Left cardiac atrium (tissue), 4 donors: ENCODE measurements at regions of chr6 and their contacts with region 1.

Region 1: GRCh38 chr6:137313928-137314855 is 95.0 kb upstream of the IFNGR1 start:
- DNase-seq: peak; percentile 80
- ATAC-seq: peak; percentile 93 to 95

Region 2: DNA sequence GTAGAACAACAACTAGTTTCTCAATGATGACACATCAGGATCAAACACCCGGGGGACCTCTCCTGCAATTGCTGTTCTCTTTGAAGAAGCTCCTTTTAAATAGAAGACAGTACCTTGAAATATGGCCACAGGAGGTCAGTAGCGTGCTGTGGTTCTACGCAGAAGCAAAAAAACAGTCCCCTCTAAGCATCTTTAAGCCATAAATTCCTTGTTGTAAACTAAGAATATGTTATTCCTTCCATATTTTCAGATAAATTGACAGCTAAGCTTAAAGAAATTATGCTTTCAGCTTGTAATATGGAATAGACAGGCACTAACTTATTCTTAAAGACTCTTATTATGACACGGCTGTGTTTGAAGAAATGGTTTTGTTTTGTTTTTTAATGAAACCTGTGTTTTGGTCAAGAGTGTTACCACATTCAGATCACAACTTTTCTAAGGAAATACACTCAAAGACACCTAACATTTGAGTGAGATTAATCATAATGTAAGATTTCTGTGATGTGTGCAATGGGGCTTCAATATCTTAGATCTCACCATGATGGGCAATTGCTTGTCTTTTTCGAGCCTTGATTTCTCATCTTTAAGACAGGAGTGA is 219.7 kb before region 1 on chr6:
- intact Hi-C with region 1: loop called (anchors 2 to 5 kb)
- DNase-seq: peak; percentile 43
- ATAC-seq: peak; percentile 61 to 69

Region 3: GRCh38 chr6:137218917-137219663 is 95.1 kb before region 1 on chr6 and contains the start of gene IFNGR1:
- intact Hi-C with region 1: loop called in 1 of 2 experiments (anchors 5 kb)
- DNase-seq: peak; percentile 99
- ATAC-seq: peak; percentile 95 to 97
- total RNA-seq, gene IFNGR1: 128 to 158 TPM

Region 4: GRCh38 chr6:137271245-137272183 is 42.7 kb before region 1 on chr6:
- intact Hi-C with region 1: loop called in 1 of 2 experiments (anchors 5 kb)
- DNase-seq: no peak
- ATAC-seq: peak; percentile 55 to 80